CD14-positive monocyte (primary cell): ENCODE measurements at regions of chr10 and their contacts with region 1.

Region 1: DNA sequence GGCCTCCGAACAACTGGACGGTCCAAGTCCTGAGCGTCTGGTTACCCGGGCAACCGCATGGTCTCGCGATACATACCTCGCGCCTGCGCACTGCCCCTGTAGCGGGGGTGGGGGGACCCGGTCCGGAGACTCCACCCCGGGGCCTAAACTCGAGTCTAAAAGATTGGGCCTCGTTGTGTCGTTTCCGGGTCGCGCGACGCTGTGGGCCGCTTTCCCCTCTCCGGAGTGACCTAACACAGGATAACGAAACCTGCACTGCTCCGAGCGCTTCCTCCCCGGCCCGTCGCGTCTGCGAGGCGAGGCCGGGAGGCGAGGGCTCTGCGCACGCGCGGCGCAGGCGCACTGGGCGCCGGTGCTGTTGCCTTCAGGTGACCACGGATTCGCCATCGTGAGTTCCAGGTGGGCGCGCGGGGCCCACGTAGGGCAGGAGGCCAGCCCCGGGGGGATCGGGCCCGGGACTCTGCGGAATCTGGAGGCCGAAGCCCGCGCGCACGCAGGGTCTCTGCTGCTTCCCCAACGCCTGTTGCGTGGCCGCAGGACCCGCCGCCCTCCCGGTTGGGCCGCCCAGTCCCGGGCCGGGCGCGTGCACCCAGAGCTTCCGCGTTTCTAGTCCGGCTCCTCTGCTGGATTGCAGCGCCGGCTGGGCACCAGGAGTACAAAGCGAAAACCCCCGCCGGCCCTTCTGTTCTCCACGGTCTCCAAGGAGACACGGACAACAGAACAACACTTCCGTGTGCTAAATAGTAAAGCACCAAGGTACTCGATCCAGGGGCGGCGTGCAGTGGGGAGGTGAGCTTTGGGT is at the start of gene RPP38:
- DNase-seq: peak; percentile 92 to 94 (median 94)
- H3K4me3 ChIP-seq: peak within 1 kb of the TSS; percentile 67 to 81 (median 81)
- H3K4me3 Mint-ChIP-seq: peak within 1 kb of the TSS; percentile 98 to 99
- H3K27ac ChIP-seq: peak within 1 kb of the TSS; percentile 95 to 96
- H3K27ac Mint-ChIP-seq: peak within 1 kb of the TSS; percentile 97 to 99 (median 98)
- H3K4me1 ChIP-seq: peaks cover 19 to 21% of the 10 kb centered on the region in 2 donors
- H3K4me1 Mint-ChIP-seq: peaks cover 23% of the 10 kb centered on the region
- H3K27me3 ChIP-seq: no peaks in the 10 kb centered on the region
- H3K27me3 Mint-ChIP-seq: peaks cover 0 to 8% (median 2%) of the 10 kb centered on the region in 3 donors
- CTCF ChIP-seq: no peak
- polyA plus RNA-seq, gene RPP38: 8.1 to 13.8 (median 13.3) TPM

Region 2: DNA sequence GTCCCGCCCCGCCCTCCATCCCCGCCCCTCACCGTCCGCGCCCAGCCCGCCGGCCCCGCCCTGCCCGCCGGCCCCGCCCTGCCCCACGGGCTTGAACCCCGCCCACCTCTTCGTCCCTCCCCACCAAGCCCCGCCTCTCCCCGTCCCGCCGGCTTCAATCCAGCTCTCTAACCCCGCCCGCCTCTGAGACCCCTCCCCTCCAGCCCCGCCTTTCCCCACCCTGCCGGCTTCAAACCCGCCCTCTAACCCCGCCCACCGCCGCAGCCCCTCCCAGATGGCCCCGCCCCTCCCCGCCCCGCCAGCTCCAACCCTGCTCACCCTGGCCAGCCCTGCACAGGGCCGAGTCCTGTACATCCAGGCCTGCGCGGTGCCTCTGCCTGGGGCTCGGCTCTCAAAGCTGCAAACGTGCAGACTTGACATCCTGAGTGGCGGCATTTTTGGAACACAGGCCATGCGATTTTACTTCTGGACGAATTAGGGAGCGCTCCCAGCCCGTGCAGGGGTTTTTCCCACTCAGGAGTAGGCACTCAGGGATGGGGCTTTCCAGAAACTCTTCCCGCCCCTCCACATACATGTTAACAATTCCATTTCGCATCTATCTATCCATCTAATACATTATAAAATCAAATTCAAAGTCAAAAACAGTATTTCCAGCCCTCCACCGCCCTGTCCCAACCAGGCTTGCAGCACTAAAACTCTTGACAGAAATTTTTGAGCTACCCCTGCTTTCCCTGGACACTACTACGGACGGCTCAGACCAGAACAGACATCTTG is 71.8 kb after region 1 on chr10:
- intact Hi-C with region 1: loop called (anchors 5 to 10 kb)
- DNase-seq: peak; percentile 88 to 95 (median 91)
- H3K4me3 ChIP-seq: peak overlapping the region in 1 of 3 experiments; percentile 45
- H3K4me3 Mint-ChIP-seq: peak overlapping the region; percentile 49 to 62
- H3K27ac ChIP-seq: no peak overlapping the region
- H3K27ac Mint-ChIP-seq: peak overlapping the region in 2 of 7 donors; percentile 50 to 57
- H3K4me1 ChIP-seq: peaks cover 16 to 22% of the 10 kb centered on the region in 2 donors
- H3K4me1 Mint-ChIP-seq: peaks cover 19% of the 10 kb centered on the region
- H3K27me3 ChIP-seq: peaks cover 30 to 32% of the 10 kb centered on the region in 2 donors
- H3K27me3 Mint-ChIP-seq: peaks cover 38 to 48% (median 46%) of the 10 kb centered on the region in 3 donors
- CTCF ChIP-seq: no peak